GM13976 (cell line): ENCODE measurements at regions of chr12 and their contacts with region 1.

Region 1: DNA sequence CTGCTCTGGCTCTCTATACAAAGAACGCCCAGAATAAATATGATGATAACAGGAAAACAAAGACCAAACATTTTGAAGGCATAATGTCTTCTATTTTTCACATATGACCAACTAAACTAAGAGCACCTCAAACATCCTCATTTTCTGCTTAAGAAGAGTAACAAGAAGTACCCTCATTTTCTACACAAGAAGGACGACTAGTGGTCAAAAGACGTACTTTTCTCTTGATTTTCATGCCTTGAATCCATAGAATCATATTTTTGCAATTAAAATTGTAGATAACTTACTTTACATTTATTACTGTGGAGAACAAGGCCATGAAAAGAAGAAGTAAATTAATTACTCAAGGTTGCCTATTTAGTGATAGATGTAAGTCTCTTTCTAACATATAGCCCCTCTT is 358.6 kb downstream of the DUSP6 start:
- DNase-seq: peak; percentile 3
- CTCF ChIP-seq: peak; percentile 9

Region 2: DNA sequence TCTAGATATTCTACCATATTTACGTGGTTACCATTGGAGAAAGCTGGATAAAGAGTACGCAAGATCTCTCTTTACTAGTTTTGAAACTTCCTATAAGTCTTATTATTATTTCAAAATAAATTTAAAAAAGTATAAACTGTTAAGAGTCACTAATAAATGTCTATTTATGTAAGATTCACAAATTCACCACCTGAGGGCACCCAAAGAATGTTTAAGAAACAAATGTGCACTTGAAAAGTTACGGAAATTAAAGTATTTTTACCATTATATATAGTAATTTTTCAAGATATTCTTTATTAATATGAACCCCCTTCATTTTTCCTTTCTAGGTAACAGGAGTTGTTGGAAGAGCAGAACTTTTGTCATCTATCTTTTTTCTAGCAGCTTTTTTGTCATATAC is 839.7 kb before region 1 on chr12:
- in situ Hi-C with region 1: loop called (anchors 25 kb)
- DNase-seq: no peak
- CTCF ChIP-seq: peak; percentile 15

Region 3: GRCh38 chr12:88638966-88639760 is 354.5 kb before region 1 on chr12:
- in situ Hi-C with region 1: loop called (anchors 25 kb)
- DNase-seq: no peak
- CTCF ChIP-seq: no peak

Region 4: GRCh38 chr12:89632778-89633177 is 639.1 kb after region 1 on chr12:
- in situ Hi-C with region 1: no loop called
- DNase-seq: no peak
- CTCF ChIP-seq: no peak